Activated B cell treated with CpG ODN at 0.5 μM for 24 hours (primary cell): ENCODE measurements at regions of chr3 and their contacts with region 1.

Region 1: DNA sequence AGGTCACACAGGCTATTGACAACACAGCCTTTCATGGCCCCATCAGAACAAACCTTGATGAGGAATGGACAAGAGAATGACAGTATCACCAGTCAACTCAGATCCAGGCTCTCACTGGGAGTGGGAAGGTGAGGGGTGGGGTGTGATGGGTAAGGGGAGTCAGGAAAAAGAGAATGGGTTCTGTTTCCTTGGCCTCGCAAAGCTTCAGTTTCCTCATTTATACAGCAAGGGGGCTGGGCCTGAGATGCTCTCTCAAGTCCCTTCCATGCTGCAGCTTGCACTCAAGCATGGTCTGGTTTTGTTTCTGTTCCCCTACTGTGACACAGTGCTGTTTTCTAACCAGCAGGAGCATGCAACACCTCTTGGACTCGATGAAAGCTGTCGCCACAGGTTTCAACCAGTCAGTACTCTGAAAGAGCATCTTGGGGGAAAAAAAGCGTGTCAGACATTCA is 65.7 kb upstream of the IL12A start:
- DNase-seq: peak; percentile 29
- ATAC-seq: peak; percentile 98
- H3K4me3 Mint-ChIP-seq: peak overlapping the region; percentile 42
- H3K27ac Mint-ChIP-seq: peak overlapping the region; percentile 59
- H3K4me1 Mint-ChIP-seq: peaks cover 38% of the 10 kb centered on the region
- H3K27me3 Mint-ChIP-seq: no peaks in the 10 kb centered on the region
- CTCF ChIP-seq: no peak

Region 2: GRCh38 chr3:159902546-159903314 is 20.2 kb before region 1 on chr3:
- CTCF ChIA-PET with region 1: interaction called, 3 read pairs
- POLR2A ChIA-PET with region 1: interaction called, 5 read pairs
- intact Hi-C with region 1: loop called (anchors 1 kb)
- DNase-seq: no peak
- ATAC-seq: peak; percentile 59
- H3K4me3 Mint-ChIP-seq: no peak overlapping the region
- H3K27ac Mint-ChIP-seq: peak overlapping the region; percentile 63
- H3K4me1 Mint-ChIP-seq: peaks cover 25% of the 10 kb centered on the region
- H3K27me3 Mint-ChIP-seq: no peaks in the 10 kb centered on the region
- CTCF ChIP-seq: no peak

Region 3: GRCh38 chr3:159964166-159964973 is 41.5 kb after region 1 on chr3:
- CTCF ChIA-PET with region 1: interaction called, 3 read pairs
- POLR2A ChIA-PET with region 1: interaction called, 5 read pairs
- intact Hi-C with region 1: loop called (anchors 1 kb)
- DNase-seq: no peak
- ATAC-seq: peak; percentile 89
- H3K4me3 Mint-ChIP-seq: peak overlapping the region; percentile 66
- H3K27ac Mint-ChIP-seq: peak overlapping the region; percentile 90
- H3K4me1 Mint-ChIP-seq: peaks cover 15% of the 10 kb centered on the region
- H3K27me3 Mint-ChIP-seq: no peaks in the 10 kb centered on the region
- CTCF ChIP-seq: no peak

Region 4: DNA sequence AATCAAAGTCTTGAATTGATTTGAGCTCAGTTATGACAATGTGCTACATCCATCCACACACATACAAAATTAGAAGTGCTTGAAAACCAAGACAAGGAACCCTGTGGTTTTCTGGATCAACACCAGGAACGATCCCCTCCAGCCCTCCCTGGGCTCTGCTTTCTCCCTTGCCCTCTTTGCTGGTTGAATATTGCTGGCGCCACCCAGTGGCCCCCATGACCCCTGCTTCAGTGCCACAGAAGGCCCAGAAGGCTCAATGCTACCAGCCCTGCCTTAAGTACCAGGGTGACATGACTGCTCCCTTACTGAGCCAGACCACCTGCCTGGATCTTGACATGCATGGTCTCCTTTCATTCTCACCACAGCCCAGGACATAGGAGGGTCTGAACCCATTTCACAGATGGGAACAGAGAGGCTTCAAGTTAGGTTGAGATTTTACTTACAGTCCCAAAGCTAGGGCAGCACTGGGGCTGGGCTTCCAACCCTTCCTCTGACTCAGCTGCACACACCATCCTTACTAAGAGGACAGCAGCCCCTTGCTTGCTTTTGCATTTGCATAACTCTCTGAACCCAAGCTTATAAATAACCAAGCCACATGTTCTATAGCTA is 80.7 kb after region 1 on chr3:
- CTCF ChIA-PET with region 1: interaction called, 13 read pairs
- POLR2A ChIA-PET with region 1: no interaction called
- intact Hi-C with region 1: no loop called
- DNase-seq: peak; percentile 38
- ATAC-seq: peak; percentile 92
- H3K4me3 Mint-ChIP-seq: no peak overlapping the region
- H3K27ac Mint-ChIP-seq: no peak overlapping the region
- H3K4me1 Mint-ChIP-seq: peaks cover 10% of the 10 kb centered on the region
- H3K27me3 Mint-ChIP-seq: no peaks in the 10 kb centered on the region
- CTCF ChIP-seq: no peak